Activated CD8-positive, alpha-beta T cell treated with anti-CD3 and anti-CD28 coated beads for 36 hours (primary cell): ENCODE measurements at regions of chr11 and their contacts with region 1.

Region 1: DNA sequence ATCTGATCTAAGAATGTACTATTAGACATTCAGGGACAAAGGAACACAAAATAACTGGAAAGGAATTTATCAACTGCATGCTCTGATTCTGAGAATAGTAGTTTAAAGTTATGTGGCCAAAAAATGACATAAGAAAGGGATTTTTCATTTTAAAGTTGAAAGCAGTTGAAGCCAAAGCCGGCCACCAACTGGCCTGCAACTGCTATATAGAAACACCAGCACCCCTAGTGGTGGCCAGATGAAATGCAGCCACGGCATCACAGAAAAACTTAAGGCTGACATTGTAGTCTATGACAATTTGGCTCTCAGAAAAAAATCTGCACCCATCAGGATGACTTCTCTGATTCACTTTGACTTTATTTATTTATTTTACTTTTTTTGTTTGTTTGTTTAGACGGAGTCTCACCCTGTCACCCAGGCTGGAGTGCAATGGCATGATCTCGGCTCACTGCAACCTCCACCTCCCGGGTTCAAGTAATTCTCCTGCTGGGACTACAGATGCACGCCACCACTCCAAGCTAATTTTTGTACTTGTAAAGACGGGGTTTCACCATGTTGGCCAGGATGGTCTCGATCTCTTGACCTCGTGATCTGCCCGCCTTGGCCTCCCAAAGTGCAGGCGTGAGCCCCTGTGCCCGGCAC is 59.2 kb downstream of the SLC35F2 start:
- DNase-seq: peak; percentile 87
- ATAC-seq: peak; percentile 98
- H3K4me3 Mint-ChIP-seq: no peak overlapping the region
- H3K27ac Mint-ChIP-seq: no peak overlapping the region
- H3K4me1 Mint-ChIP-seq: no peaks in the 10 kb centered on the region
- H3K27me3 Mint-ChIP-seq: no peaks in the 10 kb centered on the region
- CTCF ChIP-seq: peak; percentile 100

Region 2: DNA sequence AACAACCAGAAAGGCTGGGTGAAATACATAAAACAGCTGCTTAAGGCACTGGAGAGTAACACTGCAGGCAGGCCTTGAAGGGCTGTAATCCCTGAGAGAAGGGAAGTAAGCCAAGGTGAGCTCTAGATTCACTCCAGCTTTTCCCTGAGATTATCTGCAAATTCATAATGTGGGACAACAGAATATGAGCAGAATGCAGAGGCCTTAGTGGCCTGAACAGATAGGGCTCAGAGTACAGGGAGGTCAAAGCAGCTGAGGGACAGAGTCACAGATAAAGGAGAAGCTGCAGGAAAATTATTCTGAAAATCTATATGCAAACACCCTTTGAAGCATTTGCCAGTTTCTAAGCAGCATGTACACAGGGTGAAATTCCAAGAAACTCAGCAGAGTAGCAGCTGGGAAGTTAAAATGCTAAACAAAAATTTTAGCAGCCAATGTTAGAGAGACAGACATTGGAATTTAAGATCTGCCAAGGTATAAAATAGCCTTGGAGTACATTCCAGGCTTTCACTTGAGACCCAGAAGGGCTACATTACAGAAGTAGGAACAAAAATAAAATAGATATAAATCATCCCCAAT is 293.6 kb before region 1 on chr11:
- CTCF ChIA-PET with region 1: no interaction called
- POLR2A ChIA-PET with region 1: no interaction called
- intact Hi-C with region 1: no loop called
- DNase-seq: no peak
- ATAC-seq: no peak
- H3K4me3 Mint-ChIP-seq: no peak overlapping the region
- H3K27ac Mint-ChIP-seq: no peak overlapping the region
- H3K4me1 Mint-ChIP-seq: no peaks in the 10 kb centered on the region
- H3K27me3 Mint-ChIP-seq: no peaks in the 10 kb centered on the region
- CTCF ChIP-seq: no peak

Region 3: DNA sequence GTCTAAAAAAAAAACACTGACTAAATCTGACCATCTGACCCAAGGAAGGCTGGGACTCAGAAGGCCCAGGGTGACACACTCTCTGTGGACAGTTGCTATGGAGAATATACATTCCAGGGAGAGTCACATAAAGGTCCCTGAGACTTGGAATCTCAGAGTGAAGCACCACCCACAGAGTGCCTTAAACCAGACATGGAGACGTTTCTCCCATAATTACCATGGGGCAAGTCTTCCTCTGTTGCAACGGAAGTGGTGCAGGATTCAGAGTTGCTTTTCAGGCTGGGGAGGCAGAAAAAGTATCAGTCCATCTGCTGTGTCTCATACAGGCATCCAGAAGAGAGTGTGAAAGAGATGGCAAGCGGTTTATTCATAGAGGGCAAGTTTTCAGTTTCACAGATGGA is 28.8 kb before region 1 on chr11:
- CTCF ChIA-PET with region 1: interaction called, 15 read pairs
- POLR2A ChIA-PET with region 1: no interaction called
- intact Hi-C with region 1: no loop called
- DNase-seq: no peak
- ATAC-seq: no peak
- H3K4me3 Mint-ChIP-seq: no peak overlapping the region
- H3K27ac Mint-ChIP-seq: no peak overlapping the region
- H3K4me1 Mint-ChIP-seq: peaks cover 1% of the 10 kb centered on the region
- H3K27me3 Mint-ChIP-seq: peaks cover 8% of the 10 kb centered on the region
- CTCF ChIP-seq: no peak

Region 4: GRCh38 chr11:107785401-107785800 is 13.9 kb before region 1 on chr11:
- CTCF ChIA-PET with region 1: interaction called, 25 read pairs
- POLR2A ChIA-PET with region 1: no interaction called
- intact Hi-C with region 1: loop called (anchors 1 kb)
- DNase-seq: peak; percentile 49
- ATAC-seq: peak; percentile 87
- H3K4me3 Mint-ChIP-seq: no peak overlapping the region
- H3K27ac Mint-ChIP-seq: no peak overlapping the region
- H3K4me1 Mint-ChIP-seq: peaks cover 7% of the 10 kb centered on the region
- H3K27me3 Mint-ChIP-seq: no peaks in the 10 kb centered on the region
- CTCF ChIP-seq: no peak